Activated T-helper 2 cell treated with anti-CD3 and anti-CD28 coated beads, Interferon-gamma antibody, Interleukin-2, Interleukin-4, amounts not matched to agents 10 μg/mL and 5 μg/mL and 100 μg/mL, durations not matched to agents 14 hours and 24 hours and 36 hours (primary cell): ENCODE measurements at regions of chr10 and their contacts with region 1.

Region 1: DNA sequence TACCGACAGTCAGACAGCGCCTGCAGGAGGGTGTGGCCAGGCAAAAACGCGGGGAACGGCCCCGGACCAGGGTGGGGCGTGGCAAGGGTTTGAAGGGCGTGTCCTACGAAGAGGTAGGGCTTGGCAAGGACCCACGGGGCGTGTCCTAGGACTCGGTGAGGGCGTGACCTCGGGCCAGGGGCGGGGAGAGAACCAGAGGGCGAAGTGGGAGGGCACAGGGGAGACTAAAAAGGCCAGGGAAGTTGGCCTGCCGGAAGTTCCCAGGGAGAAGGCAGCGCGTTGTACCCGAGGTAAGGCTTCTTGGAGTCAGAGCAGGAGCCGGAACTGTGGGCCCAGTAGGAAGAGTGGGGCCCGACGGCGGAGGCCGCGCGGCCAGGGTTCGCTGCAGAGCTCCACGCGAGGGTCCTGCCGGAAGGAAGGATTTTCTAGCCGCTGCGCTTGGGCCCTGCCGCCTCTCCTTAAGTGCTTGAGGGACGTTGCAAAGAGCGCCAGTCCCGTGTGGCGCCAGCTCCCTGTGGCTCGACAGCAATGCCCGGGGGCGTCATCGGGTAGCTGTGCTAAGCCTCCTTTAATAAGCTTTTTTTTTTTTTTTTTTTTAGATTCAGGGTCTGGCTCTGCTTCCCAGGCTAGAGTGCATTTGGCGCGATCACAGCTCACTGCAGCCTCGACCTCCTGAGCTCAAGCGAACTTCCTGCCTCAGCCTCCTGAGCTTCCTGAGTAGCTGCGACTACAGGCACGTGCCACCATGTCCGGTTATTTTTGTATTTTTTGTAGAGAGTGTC is at the start of gene PTER:
- DNase-seq: peak; percentile 97
- H3K4me3 Mint-ChIP-seq: peak within 1 kb of the TSS; percentile 93
- H3K27ac Mint-ChIP-seq: peak within 1 kb of the TSS; percentile 93
- H3K4me1 Mint-ChIP-seq: peaks cover 36% of the 10 kb centered on the region
- H3K27me3 Mint-ChIP-seq: peaks cover 11% of the 10 kb centered on the region
- total RNA-seq, gene PTER: 18.9 and 19.9 TPM in 2 replicates

Region 2: GRCh38 chr10:14878266-14879054 is 1558.5 kb before region 1 on chr10 and contains the start of gene SUV39H2:
- intact Hi-C with region 1: loop called (anchors 10 kb)
- DNase-seq: peak; percentile 93
- H3K4me3 Mint-ChIP-seq: peak within 1 kb of the TSS; percentile 94
- H3K27ac Mint-ChIP-seq: peak within 1 kb of the TSS; percentile 88
- H3K4me1 Mint-ChIP-seq: peaks cover 34% of the 10 kb centered on the region
- H3K27me3 Mint-ChIP-seq: no peaks in the 10 kb centered on the region
- total RNA-seq, gene SUV39H2: 44.0 and 45.0 TPM in 2 replicates

Region 3: GRCh38 chr10:15859906-15860691 is 576.9 kb before region 1 on chr10 and contains the start of gene MINDY3:
- intact Hi-C with region 1: loop called (anchors 10 kb)
- DNase-seq: peak; percentile 69
- H3K4me3 Mint-ChIP-seq: peak within 1 kb of the TSS; percentile 92
- H3K27ac Mint-ChIP-seq: peak within 1 kb of the TSS; percentile 81
- H3K4me1 Mint-ChIP-seq: peaks cover 24% of the 10 kb centered on the region
- H3K27me3 Mint-ChIP-seq: peaks cover 17% of the 10 kb centered on the region
- total RNA-seq, gene MINDY3: 19.2 and 20.9 TPM in 2 replicates

Region 4: GRCh38 chr10:16520900-16521299 is 84.0 kb after region 1 on chr10:
- intact Hi-C with region 1: loop called (anchors 2 kb)
- DNase-seq: peak; percentile 11
- H3K4me3 Mint-ChIP-seq: peak overlapping the region; percentile 30
- H3K27ac Mint-ChIP-seq: no peak overlapping the region
- H3K4me1 Mint-ChIP-seq: peaks cover 4% of the 10 kb centered on the region
- H3K27me3 Mint-ChIP-seq: peaks cover 52% of the 10 kb centered on the region

Region 5: GRCh38 chr10:16663444-16663843 is 226.5 kb after region 1 on chr10:
- intact Hi-C with region 1: loop called (anchors 10 kb)
- DNase-seq: no peak
- H3K4me3 Mint-ChIP-seq: no peak overlapping the region
- H3K27ac Mint-ChIP-seq: no peak overlapping the region
- H3K4me1 Mint-ChIP-seq: peaks cover 14% of the 10 kb centered on the region
- H3K27me3 Mint-ChIP-seq: no peaks in the 10 kb centered on the region

Region 6: GRCh38 chr10:16717622-16718395 is 280.9 kb after region 1 on chr10:
- intact Hi-C with region 1: no loop called
- DNase-seq: no peak
- H3K4me3 Mint-ChIP-seq: no peak overlapping the region
- H3K27ac Mint-ChIP-seq: no peak overlapping the region
- H3K4me1 Mint-ChIP-seq: no peaks in the 10 kb centered on the region
- H3K27me3 Mint-ChIP-seq: no peaks in the 10 kb centered on the region

Region 7: GRCh38 chr10:16817125-16818019 is 380.4 kb after region 1 on chr10 and contains the start of gene RSU1:
- intact Hi-C with region 1: loop called (anchors 1 kb)
- DNase-seq: peak; percentile 100
- H3K4me3 Mint-ChIP-seq: peak within 1 kb of the TSS; percentile 93
- H3K27ac Mint-ChIP-seq: peak within 1 kb of the TSS; percentile 79
- H3K4me1 Mint-ChIP-seq: peaks cover 27% of the 10 kb centered on the region
- H3K27me3 Mint-ChIP-seq: peaks cover 10% of the 10 kb centered on the region
- total RNA-seq, gene RSU1: 49.1 and 54.0 TPM in 2 replicates

Region 8: GRCh38 chr10:17200912-17201793 is 764.2 kb after region 1 on chr10 and contains the start of gene TRDMT1:
- intact Hi-C with region 1: loop called (anchors 10 kb)
- DNase-seq: peak; percentile 77
- H3K4me3 Mint-ChIP-seq: peak within 1 kb of the TSS; percentile 96
- H3K27ac Mint-ChIP-seq: peak within 1 kb of the TSS; percentile 77
- H3K4me1 Mint-ChIP-seq: peaks cover 49% of the 10 kb centered on the region
- H3K27me3 Mint-ChIP-seq: peaks cover 7% of the 10 kb centered on the region
- total RNA-seq, gene TRDMT1: 3.2 and 4.2 TPM in 2 replicates